ENCODE measurements at regions of chr19 and their contacts with region 1.

Region 1: DNA sequence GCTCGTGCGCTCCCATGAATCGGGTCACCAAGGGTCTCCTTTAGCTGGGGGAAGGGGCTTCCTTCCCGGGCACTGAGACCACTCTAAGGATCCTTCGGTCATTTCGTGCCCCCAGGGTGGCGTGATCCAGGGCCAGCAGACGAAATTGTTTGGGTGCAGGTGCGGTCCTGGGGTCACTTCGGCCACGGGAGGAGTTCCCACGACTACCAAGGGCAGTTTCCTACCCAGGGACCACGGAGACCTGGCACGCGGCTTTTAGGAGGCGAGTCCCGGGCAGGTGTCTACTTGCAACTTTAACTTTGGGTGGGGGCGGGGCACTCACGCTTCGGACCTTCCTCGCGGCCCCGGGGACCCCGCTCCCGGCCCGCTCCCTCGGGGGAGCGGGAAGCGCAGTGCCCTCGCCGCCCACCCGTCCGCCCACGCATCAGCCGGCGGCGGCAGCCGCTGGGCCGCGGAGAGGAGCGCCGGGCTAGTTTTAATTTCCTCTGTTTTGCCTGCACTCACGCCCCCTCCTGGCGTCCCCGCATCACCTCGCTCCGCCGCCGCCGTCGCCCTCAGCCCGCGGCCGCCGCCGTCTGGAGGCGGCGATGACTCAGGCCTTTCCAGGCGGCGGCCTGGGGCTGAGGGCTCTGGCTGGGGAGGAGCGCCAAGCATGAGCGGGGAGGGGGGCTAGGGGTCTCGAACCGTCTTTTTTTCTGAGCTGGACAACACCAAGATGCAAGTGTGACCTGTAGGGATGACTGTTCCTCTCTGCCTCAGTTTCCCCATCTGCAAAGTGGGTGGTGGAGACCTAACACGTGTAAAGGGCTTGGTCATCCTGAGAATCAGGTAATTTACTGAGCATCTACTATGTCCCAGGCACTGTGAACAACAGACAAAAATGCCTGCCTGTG is 21.8 kb downstream of the OLFM2 start:
- DNase-seq: peak; percentile 49 to 70
- ATAC-seq: peak; percentile 66 to 85 (median 80)
- H3K4me3 ChIP-seq: peak overlapping the region; percentile 15 to 57 (median 46)
- H3K27ac ChIP-seq: peak overlapping the region in 1 of 10 donors; percentile 28
- H3K4me1 ChIP-seq: peaks cover 5 to 20% (median 14%) of the 10 kb centered on the region in 9 donors
- H3K27me3 ChIP-seq: peaks cover 10 to 89% (median 51%) of the 10 kb centered on the region in 7 donors
- CTCF ChIP-seq: peak in 8 of 9 donors; percentile 40 to 70 (median 60)

Region 2: DNA sequence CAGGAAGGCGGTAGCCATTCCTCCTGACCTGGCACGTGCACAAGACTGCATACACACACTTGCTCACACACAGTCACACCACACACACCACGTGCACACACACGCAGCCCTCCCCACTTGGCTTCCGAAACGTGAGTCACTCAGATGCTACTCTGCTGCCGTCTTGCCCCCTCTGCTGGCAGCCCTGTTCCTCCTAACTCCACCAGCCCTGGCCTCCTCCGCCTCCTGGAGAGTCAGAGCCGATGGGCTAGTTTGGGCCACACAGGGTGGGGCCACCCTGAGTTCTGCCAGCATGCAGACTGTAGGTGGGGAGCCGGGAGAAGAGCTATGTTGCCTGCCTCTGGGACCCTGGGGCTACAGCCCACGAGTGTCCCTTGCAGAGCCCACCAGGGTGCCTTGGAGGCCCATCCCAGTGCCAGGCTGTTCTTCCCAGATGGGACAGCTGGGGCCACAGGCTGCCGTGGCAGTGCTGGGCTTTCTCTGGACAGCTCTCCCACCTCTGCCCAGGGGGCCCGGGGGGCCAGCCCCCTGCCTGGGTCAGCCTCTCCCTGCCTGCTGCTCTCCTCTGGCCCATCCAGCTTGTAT is 67.4 kb before region 1 on chr19:
- intact Hi-C with region 1: loop called in 1 of 10 experiments (anchors 10 kb)
- DNase-seq: no peak
- ATAC-seq: peak in 7 of 8 donors; percentile 26 to 59 (median 38)
- H3K4me3 ChIP-seq: no peak overlapping the region
- H3K27ac ChIP-seq: no peak overlapping the region
- H3K4me1 ChIP-seq: peaks cover 0 to 16% (median 2%) of the 10 kb centered on the region in 9 donors
- H3K27me3 ChIP-seq: no peaks in the 10 kb centered on the region
- CTCF ChIP-seq: peak in 6 of 9 donors; percentile 26 to 44 (median 37)

Measured in heart right ventricle (tissue), 16 donors.